T-cell (primary cell): ENCODE measurements at regions of chr9 and their contacts with region 1.

Region 1: GRCh38 chr9:83403527-83404238 is 134.5 kb downstream of the FRMD3 start:
- DNase-seq: no peak
- ATAC-seq: no peak
- H3K4me3 ChIP-seq: no peak overlapping the region
- H3K4me3 Mint-ChIP-seq: no peak overlapping the region
- H3K27ac ChIP-seq: no peak overlapping the region
- H3K27ac Mint-ChIP-seq: no peak overlapping the region
- H3K4me1 ChIP-seq: no peaks in the 10 kb centered on the region
- H3K4me1 Mint-ChIP-seq: no peaks in the 10 kb centered on the region
- H3K27me3 ChIP-seq: no peaks in the 10 kb centered on the region
- H3K27me3 Mint-ChIP-seq: no peaks in the 10 kb centered on the region

Region 2: GRCh38 chr9:82302968-82303655 is 1100.6 kb before region 1 on chr9:
- CTCF ChIA-PET with region 1: no interaction called
- POLR2A ChIA-PET with region 1: no interaction called
- DNase-seq: no peak
- ATAC-seq: no peak
- H3K4me3 ChIP-seq: no peak overlapping the region
- H3K4me3 Mint-ChIP-seq: no peak overlapping the region
- H3K27ac ChIP-seq: no peak overlapping the region
- H3K27ac Mint-ChIP-seq: no peak overlapping the region
- H3K4me1 ChIP-seq: no peaks in the 10 kb centered on the region
- H3K4me1 Mint-ChIP-seq: no peaks in the 10 kb centered on the region
- H3K27me3 ChIP-seq: no peaks in the 10 kb centered on the region
- H3K27me3 Mint-ChIP-seq: no peaks in the 10 kb centered on the region

Region 3: GRCh38 chr9:83334320-83334719 is 69.4 kb before region 1 on chr9:
- CTCF ChIA-PET with region 1: no interaction called
- POLR2A ChIA-PET with region 1: no interaction called
- DNase-seq: peak in 34 of 35 experiments; percentile 2 to 64 (median 35)
- ATAC-seq: no peak
- H3K4me3 ChIP-seq: no peak overlapping the region
- H3K4me3 Mint-ChIP-seq: no peak overlapping the region
- H3K27ac ChIP-seq: no peak overlapping the region
- H3K27ac Mint-ChIP-seq: no peak overlapping the region
- H3K4me1 ChIP-seq: no peaks in the 10 kb centered on the region
- H3K4me1 Mint-ChIP-seq: no peaks in the 10 kb centered on the region
- H3K27me3 ChIP-seq: no peaks in the 10 kb centered on the region
- H3K27me3 Mint-ChIP-seq: peaks cover 0 to 4% of the 10 kb centered on the region in 2 donors

Region 4: GRCh38 chr9:84471816-84472215 is 1068.1 kb after region 1 on chr9:
- CTCF ChIA-PET with region 1: no interaction called
- POLR2A ChIA-PET with region 1: interaction called in 1 of 2 experiments, 10 read pairs
- DNase-seq: no peak
- ATAC-seq: no peak
- H3K4me3 ChIP-seq: no peak overlapping the region
- H3K4me3 Mint-ChIP-seq: no peak overlapping the region
- H3K27ac ChIP-seq: no peak overlapping the region
- H3K27ac Mint-ChIP-seq: no peak overlapping the region
- H3K4me1 ChIP-seq: no peaks in the 10 kb centered on the region
- H3K4me1 Mint-ChIP-seq: no peaks in the 10 kb centered on the region
- H3K27me3 ChIP-seq: peaks cover 0 to 3% of the 10 kb centered on the region in 2 experiments
- H3K27me3 Mint-ChIP-seq: peaks cover 2 to 6% of the 10 kb centered on the region in 2 donors